ENCODE measurements at regions of chr14 and their contacts with region 1.

Region 1: DNA sequence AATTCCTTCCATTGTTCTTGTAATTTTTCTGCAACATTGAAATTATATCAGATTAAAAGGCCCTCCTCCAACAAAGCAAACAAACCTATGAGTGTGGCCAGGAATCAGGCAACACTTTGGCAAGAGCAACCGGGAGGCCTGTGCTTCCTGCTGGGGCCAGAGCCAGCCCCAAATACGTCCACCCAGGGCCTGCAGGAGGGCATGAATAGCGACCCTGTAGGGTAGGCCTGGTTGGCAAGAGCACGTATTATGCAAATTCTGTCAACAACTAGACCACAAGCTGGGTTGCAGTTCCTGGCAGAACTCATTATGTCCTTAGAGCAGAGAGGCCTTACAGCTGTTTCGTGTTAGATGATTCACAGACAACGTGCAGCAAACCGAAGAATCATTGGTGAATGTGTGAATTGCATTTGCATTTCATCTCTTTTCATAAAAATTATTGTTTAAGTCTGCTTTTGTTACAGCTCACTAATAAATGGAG is 26.9 kb upstream of the LGALS3 start:
- DNase-seq: peak in 1 of 2 experiments; percentile 28
- H3K4me3 ChIP-seq: peak overlapping the region; percentile 37
- H3K4me3 Mint-ChIP-seq: peak overlapping the region; percentile 91
- H3K27ac Mint-ChIP-seq: peak overlapping the region; percentile 99
- H3K4me1 ChIP-seq: peaks cover 35% of the 10 kb centered on the region
- H3K4me1 Mint-ChIP-seq: peaks cover 25% of the 10 kb centered on the region
- H3K27me3 ChIP-seq: no peaks in the 10 kb centered on the region
- H3K27me3 Mint-ChIP-seq: no peaks in the 10 kb centered on the region
- CTCF ChIP-seq: no peak

Region 2: DNA sequence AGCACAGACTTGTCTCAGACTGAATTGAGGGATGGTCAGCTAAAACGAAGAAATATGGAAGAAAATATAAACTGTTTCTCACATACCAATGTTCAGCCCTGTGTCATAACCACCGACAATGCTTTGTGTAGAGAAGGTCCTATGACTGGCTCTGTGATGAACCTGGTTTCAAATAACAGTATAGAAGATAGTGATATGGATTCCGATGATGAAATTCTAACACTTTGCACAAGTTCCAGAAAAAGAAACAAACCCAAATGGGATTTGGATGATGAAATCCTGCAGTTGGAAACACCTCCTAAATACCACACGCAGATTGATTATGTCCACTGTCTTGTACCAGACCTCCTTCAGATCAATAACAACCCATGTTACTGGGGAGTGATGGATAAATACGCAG is 58.7 kb before region 1 on chr14:
- CTCF ChIA-PET with region 1: no interaction called
- POLR2A ChIA-PET with region 1: no interaction called
- intact Hi-C with region 1: no loop called
- DNase-seq: no peak
- H3K4me3 ChIP-seq: no peak overlapping the region
- H3K4me3 Mint-ChIP-seq: no peak overlapping the region
- H3K27ac Mint-ChIP-seq: no peak overlapping the region
- H3K4me1 ChIP-seq: no peaks in the 10 kb centered on the region
- H3K4me1 Mint-ChIP-seq: no peaks in the 10 kb centered on the region
- H3K27me3 ChIP-seq: no peaks in the 10 kb centered on the region
- H3K27me3 Mint-ChIP-seq: no peaks in the 10 kb centered on the region
- CTCF ChIP-seq: no peak

Region 3: DNA sequence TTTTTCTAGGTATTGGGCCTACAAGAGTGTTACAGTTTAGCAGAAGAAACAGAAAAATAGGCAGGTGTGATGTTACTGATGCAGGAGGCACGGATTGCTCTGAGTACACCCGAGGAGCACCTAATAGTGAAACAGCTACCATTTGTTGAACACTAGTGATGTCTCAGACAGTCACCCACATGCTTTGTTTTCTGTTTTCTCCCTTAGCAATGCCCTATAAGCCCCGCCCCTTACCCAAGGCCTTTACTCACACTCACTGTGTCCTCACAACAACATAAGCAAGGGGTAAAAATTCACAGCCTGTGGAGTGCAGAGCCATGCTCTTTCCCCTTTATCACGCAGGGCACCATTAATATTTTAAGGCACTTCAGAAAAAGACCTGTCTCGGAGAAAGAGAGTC is 25.0 kb before region 1 on chr14:
- CTCF ChIA-PET with region 1: interaction called, 3 read pairs
- POLR2A ChIA-PET with region 1: interaction called, 35 read pairs
- intact Hi-C with region 1: loop called (anchors 2 kb)
- DNase-seq: peak; percentile 50 to 74
- H3K4me3 ChIP-seq: no peak overlapping the region
- H3K4me3 Mint-ChIP-seq: peak overlapping the region; percentile 73
- H3K27ac Mint-ChIP-seq: peak overlapping the region; percentile 99
- H3K4me1 ChIP-seq: peaks cover 25% of the 10 kb centered on the region
- H3K4me1 Mint-ChIP-seq: peaks cover 25% of the 10 kb centered on the region
- H3K27me3 ChIP-seq: no peaks in the 10 kb centered on the region
- H3K27me3 Mint-ChIP-seq: no peaks in the 10 kb centered on the region
- CTCF ChIP-seq: no peak

Region 4: DNA sequence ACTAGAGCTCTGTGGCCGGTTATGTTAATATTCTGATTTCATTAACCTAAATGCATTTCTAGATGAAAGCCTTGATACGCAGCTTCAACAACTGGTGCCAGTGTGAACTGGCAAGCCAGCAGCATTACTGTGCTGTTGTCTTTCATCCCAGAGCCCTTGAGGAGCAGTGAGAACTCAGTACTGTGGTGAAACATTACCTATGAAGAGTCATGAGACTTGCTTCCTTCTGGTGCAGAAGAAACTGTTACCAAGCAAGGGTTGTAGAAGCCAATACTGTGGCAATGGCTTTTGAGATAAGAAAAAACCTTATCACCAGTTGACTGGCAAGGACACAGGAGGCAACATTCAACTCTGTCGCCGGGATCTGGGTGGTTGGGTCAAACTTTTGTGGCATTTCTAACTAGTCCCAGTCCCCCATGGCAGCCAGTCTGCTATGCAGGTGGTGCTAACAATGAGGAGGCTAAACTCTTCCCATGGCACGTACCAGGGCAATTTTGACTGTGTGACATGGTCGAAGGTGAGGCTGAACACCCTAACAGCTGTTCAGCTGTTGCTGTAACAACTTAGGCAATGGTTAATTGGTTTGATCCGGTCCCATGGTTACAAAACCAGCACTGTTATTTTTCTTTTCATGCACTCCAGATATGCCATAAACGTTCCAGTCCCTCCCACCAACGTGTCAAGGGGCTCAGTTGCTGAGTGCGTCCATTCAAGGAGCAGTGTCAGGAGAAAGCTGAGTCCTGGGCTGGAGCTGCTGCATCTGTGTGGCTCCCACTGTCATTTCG is 14.3 kb after region 1 on chr14:
- CTCF ChIA-PET with region 1: interaction called, 5 read pairs
- POLR2A ChIA-PET with region 1: interaction called, 10 read pairs
- intact Hi-C with region 1: loop called (anchors 1 kb)
- DNase-seq: no peak
- H3K4me3 ChIP-seq: no peak overlapping the region
- H3K4me3 Mint-ChIP-seq: no peak overlapping the region
- H3K27ac Mint-ChIP-seq: peak overlapping the region; percentile 19
- H3K4me1 ChIP-seq: peaks cover 64% of the 10 kb centered on the region
- H3K4me1 Mint-ChIP-seq: peaks cover 51% of the 10 kb centered on the region
- H3K27me3 ChIP-seq: no peaks in the 10 kb centered on the region
- H3K27me3 Mint-ChIP-seq: no peaks in the 10 kb centered on the region
- CTCF ChIP-seq: no peak

Region 5: DNA sequence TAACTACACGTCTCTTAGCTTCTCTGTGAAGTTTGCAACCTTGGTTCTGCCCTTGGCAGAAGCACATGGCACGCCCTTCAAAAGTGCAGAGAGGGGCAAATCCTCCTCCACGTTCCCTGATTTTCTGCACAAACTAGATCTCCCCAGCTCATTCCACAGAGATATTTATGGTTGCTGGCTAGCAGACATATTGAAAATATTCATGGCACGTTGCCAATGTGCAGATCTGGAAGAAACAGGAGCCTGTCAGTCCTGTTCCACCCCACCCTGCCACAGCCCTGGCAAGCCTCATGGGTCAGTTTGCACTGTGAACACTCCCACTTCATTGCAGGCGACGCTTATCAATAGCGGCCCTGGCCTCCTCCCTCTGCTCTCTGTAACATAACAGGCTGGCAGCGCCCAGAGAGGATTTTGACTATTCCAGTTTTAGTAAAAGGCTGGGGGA is 20.4 kb after region 1 on chr14:
- CTCF ChIA-PET with region 1: interaction called, 3 read pairs
- POLR2A ChIA-PET with region 1: interaction called, 15 read pairs
- intact Hi-C with region 1: loop called (anchors 1 kb)
- DNase-seq: peak; percentile 67 to 84
- H3K4me3 ChIP-seq: no peak overlapping the region
- H3K4me3 Mint-ChIP-seq: peak overlapping the region; percentile 59
- H3K27ac Mint-ChIP-seq: peak overlapping the region; percentile 90
- H3K4me1 ChIP-seq: peaks cover 90% of the 10 kb centered on the region
- H3K4me1 Mint-ChIP-seq: peaks cover 58% of the 10 kb centered on the region
- H3K27me3 ChIP-seq: no peaks in the 10 kb centered on the region
- H3K27me3 Mint-ChIP-seq: no peaks in the 10 kb centered on the region
- CTCF ChIP-seq: no peak

Region 6: GRCh38 chr14:55129428-55130195 is 27.4 kb after region 1 on chr14:
- CTCF ChIA-PET with region 1: interaction called, 6 read pairs
- POLR2A ChIA-PET with region 1: interaction called, 54 read pairs
- intact Hi-C with region 1: loop called (anchors 1 kb)
- DNase-seq: peak; percentile 66 to 74
- H3K4me3 ChIP-seq: peak overlapping the region; percentile 96
- H3K4me3 Mint-ChIP-seq: peak overlapping the region; percentile 89
- H3K27ac Mint-ChIP-seq: peak overlapping the region; percentile 83
- H3K4me1 ChIP-seq: peaks cover 65% of the 10 kb centered on the region
- H3K4me1 Mint-ChIP-seq: peaks cover 18% of the 10 kb centered on the region
- H3K27me3 ChIP-seq: no peaks in the 10 kb centered on the region
- H3K27me3 Mint-ChIP-seq: no peaks in the 10 kb centered on the region
- CTCF ChIP-seq: no peak